GM13976 (cell line): ENCODE measurements at regions of chr9 and their contacts with region 1.

Region 1: GRCh38 chr9:78187763-78188484 is 48.0 kb upstream of the CEP78 start:
- DNase-seq: no peak
- CTCF ChIP-seq: no peak

Region 2: GRCh38 chr9:77864211-77864889 is 323.6 kb before region 1 on chr9:
- in situ Hi-C with region 1: loop called (anchors 25 kb)
- DNase-seq: peak; percentile 22
- CTCF ChIP-seq: no peak